Endothelial cell of umbilical vein (primary cell): ENCODE measurements at regions of chr2 and their contacts with region 1.

Region 1: GRCh38 chr2:161722547-161723503 is 98.6 kb downstream of the SLC4A10 start:
- DNase-seq: no peak
- H3K4me3 ChIP-seq: no peak overlapping the region
- H3K27ac ChIP-seq: no peak overlapping the region
- H3K4me1 ChIP-seq: no peaks in the 10 kb centered on the region
- H3K27me3 ChIP-seq: no peaks in the 10 kb centered on the region
- CTCF ChIP-seq: no peak
- POLR2A ChIP-seq: no peak

Region 2: DNA sequence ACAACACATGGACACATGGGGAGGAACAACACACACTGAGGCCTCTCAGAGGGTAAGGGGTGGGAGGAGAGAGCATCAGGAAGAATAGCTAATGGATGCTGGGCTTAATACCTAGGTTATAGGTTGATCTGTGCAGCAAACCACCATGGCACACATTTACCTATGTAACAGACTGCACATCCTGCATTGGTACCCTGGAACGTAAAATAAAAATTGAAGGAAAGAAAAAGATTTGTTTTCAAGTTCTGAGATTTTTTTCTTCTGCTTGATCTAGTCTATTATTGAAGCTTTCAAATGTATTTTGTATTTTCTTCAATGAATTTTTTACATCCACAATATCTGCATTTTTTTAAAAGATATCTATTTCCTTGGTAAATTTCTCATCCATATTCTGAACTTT is 157.9 kb before region 1 on chr2:
- CTCF ChIA-PET with region 1: no interaction called
- POLR2A ChIA-PET with region 1: no interaction called
- dilution Hi-C with region 1: no loop called
- intact Hi-C with region 1: no loop called
- DNase-seq: no peak
- H3K4me3 ChIP-seq: no peak overlapping the region
- H3K27ac ChIP-seq: no peak overlapping the region
- H3K4me1 ChIP-seq: no peaks in the 10 kb centered on the region
- H3K27me3 ChIP-seq: no peaks in the 10 kb centered on the region
- CTCF ChIP-seq: no peak
- POLR2A ChIP-seq: no peak

Region 3: DNA sequence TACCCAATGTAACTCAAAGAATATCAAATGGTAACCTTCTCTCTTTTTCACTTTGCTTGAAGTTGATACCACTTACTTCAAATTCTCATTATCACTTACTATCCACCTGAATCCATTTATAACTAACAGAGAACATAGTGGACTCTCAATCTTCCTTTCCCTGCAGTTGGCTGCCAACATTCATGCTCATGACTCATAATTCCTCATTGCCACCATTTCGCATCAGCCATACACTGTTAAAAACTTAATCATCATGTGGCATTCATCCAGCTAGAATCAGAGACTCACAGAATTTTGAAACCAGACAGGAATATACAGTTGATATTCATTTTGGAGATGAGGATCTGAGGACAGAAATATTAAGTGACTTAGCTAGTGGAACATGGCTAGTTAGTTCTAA is 41.8 kb before region 1 on chr2:
- CTCF ChIA-PET with region 1: no interaction called
- POLR2A ChIA-PET with region 1: no interaction called
- dilution Hi-C with region 1: no loop called
- intact Hi-C with region 1: no loop called
- DNase-seq: peak; percentile 35
- H3K4me3 ChIP-seq: no peak overlapping the region
- H3K27ac ChIP-seq: no peak overlapping the region
- H3K4me1 ChIP-seq: no peaks in the 10 kb centered on the region
- H3K27me3 ChIP-seq: no peaks in the 10 kb centered on the region
- CTCF ChIP-seq: no peak
- POLR2A ChIP-seq: no peak

Region 4: GRCh38 chr2:161766334-161766733 is 43.5 kb after region 1 on chr2:
- CTCF ChIA-PET with region 1: no interaction called
- POLR2A ChIA-PET with region 1: no interaction called
- dilution Hi-C with region 1: no loop called
- intact Hi-C with region 1: no loop called
- DNase-seq: no peak
- H3K4me3 ChIP-seq: no peak overlapping the region
- H3K27ac ChIP-seq: no peak overlapping the region
- H3K4me1 ChIP-seq: no peaks in the 10 kb centered on the region
- H3K27me3 ChIP-seq: no peaks in the 10 kb centered on the region
- CTCF ChIP-seq: no peak
- POLR2A ChIP-seq: no peak

Region 5: DNA sequence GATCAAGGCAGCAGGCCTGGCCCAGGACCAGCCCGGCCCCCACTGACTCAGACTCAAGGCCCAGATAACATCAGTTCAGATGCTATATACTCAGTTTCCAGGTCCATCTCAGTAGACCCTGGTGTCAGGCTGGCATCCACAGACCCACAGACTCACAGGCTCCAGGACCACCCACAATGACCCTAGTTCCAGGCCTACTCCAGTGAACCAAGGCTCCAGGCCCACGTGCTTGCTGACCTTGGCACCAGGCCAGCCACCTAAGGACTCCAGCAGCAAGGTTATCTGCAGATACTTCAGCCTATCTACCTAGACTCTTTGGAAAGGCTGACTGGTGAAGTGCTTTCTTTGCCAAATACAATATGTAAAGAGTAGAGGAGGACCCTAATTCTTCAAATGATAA is 1064.8 kb after region 1 on chr2:
- CTCF ChIA-PET with region 1: no interaction called
- POLR2A ChIA-PET with region 1: no interaction called
- dilution Hi-C with region 1: no loop called
- intact Hi-C with region 1: loop called (anchors 10 kb)
- DNase-seq: no peak
- H3K4me3 ChIP-seq: no peak overlapping the region
- H3K27ac ChIP-seq: no peak overlapping the region
- H3K4me1 ChIP-seq: no peaks in the 10 kb centered on the region
- H3K27me3 ChIP-seq: no peaks in the 10 kb centered on the region
- CTCF ChIP-seq: no peak
- POLR2A ChIP-seq: no peak